ENCODE measurements at regions of chr4 and their contacts with region 1.

Region 1: GRCh38 chr4:15001869-15002658 is at the start of gene CPEB2:
- DNase-seq: peak; percentile 95 to 96
- ATAC-seq: peak; percentile 87 to 94 (median 89)
- H3K4me3 ChIP-seq: peak within 1 kb of the TSS; percentile 75 to 99 (median 96)
- H3K27ac ChIP-seq: peak within 1 kb of the TSS; percentile 96 to 100 (median 100)
- H3K4me1 ChIP-seq: peaks cover 0 to 29% (median 22%) of the 10 kb centered on the region in 9 donors
- H3K27me3 ChIP-seq: no peaks in the 10 kb centered on the region
- CTCF ChIP-seq: peak in 1 of 9 donors; percentile 8
- total RNA-seq, gene CPEB2: 11.6 to 31.8 (median 21.9) TPM

Region 2: DNA sequence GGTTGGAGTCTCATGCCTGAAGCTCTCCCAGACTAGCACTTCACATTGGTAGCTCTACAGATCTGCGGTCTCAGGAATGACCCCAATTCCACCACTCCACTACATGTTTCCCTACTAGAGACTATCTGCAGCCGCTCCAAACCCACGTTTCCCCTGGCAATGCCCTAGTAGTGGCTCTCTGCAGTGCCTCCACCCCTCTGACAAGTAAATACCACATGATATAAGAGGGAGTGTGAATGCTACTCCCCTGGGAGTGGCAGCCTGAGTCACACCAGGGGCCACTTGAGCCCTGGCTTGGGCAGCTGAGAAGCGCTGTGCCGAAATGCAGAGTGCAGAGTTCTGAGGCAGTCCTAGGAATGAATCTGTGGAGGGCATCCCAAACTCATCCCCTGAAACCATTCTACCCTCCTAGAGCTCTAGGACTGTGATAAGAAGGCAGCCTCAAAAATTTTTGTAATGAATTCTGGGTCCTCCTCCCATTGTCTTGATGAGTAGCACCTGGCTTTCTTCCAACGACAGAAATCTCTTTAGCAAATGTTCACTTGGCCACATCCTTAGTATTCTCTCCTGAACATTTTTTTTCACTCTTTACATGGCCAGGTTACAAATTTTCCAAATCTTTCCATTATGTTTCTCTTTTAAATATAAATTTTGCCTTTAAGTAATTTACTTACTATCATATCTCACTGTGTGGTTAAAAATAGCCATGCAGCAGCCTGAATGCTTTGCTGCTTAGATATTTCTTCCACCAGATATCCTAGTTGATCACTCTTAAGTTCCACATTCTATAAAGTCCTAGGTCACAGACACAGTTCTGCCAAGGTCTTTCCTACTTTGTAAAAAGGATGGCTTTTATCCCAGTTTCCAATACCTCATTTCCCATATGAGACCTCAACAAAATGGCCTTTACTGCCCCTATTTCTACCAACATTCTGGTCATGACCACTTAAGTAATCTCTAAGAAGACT is 160.0 kb before region 1 on chr4:
- intact Hi-C with region 1: loop called in 4 of 10 experiments (anchors 5 to 10 kb)
- DNase-seq: peak; percentile 28 to 54
- ATAC-seq: peak; percentile 78 to 99 (median 93)
- H3K4me3 ChIP-seq: peak overlapping the region in 1 of 10 donors; percentile 7
- H3K27ac ChIP-seq: peak overlapping the region in 9 of 10 donors; percentile 29 to 81 (median 74)
- H3K4me1 ChIP-seq: peaks cover 0 to 24% (median 19%) of the 10 kb centered on the region in 9 donors
- H3K27me3 ChIP-seq: no peaks in the 10 kb centered on the region
- CTCF ChIP-seq: no peak

Region 3: DNA sequence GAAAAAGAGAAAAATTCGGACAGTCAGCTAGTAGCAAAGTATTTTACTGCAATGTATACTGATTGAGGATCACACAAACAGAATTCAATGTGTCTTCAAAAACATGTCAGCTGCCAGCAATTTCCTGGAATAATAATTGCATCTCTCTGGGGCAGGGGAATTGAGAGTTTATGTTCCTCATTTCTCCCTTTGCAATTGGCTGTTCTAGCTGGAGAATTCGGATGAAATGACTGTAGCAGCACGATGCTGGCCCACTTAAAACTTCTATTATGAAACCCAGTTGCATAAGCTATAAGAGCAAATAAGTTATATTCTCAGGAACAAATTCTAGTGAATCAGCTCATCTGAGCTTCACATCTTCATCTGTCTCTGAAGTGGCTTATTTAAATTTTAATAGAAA is 99.7 kb before region 1 on chr4:
- intact Hi-C with region 1: no loop called
- DNase-seq: no peak
- ATAC-seq: no peak
- H3K4me3 ChIP-seq: no peak overlapping the region
- H3K27ac ChIP-seq: no peak overlapping the region
- H3K4me1 ChIP-seq: no peaks in the 10 kb centered on the region
- H3K27me3 ChIP-seq: no peaks in the 10 kb centered on the region
- CTCF ChIP-seq: no peak

Region 4: DNA sequence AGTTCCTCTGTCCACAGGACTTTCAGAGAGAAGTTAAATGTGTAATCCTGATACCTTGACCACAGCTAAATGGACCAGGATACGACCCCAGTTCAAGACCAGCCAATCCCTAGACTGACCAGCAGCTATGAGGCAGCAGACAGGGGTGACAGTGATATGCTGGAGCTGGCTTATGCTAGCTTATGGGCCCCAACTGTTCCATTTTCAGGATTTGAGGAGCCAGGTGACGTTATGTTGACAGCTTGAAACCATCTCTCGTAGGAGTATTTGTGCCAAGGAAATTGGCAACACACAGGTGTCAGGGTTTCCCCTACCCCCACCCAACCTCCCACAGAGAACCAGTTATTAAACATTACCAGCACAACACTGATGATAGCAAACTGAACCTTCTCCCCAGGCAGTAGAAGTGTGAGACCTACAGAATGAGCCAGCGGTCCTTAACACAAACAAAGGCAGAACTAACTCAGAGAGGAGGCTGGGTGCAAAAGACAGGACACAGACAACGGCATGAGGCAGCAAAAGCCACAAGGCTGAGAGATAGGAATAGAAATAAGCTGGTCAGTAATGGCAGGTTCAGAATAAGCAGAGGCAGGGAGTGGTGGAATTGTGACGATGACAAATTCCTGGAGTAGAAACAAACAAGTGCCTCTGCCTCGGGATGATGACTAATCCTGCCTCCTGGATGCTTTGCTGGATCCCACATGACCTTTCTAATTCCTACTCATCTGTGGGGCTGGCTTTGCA is 85.3 kb before region 1 on chr4:
- intact Hi-C with region 1: loop called in 4 of 10 experiments (anchors 2 to 10 kb)
- DNase-seq: peak in 1 of 2 donors; percentile 49
- ATAC-seq: peak; percentile 81 to 96 (median 91)
- H3K4me3 ChIP-seq: peak overlapping the region in 1 of 10 donors; percentile 10
- H3K27ac ChIP-seq: peak overlapping the region; percentile 1 to 85 (median 66)
- H3K4me1 ChIP-seq: peaks cover 0 to 22% (median 8%) of the 10 kb centered on the region in 9 donors
- H3K27me3 ChIP-seq: no peaks in the 10 kb centered on the region
- CTCF ChIP-seq: no peak

Region 5: GRCh38 chr4:15457406-15458201 is 455.5 kb after region 1 on chr4:
- intact Hi-C with region 1: loop called in 2 of 10 experiments (anchors 10 kb)
- DNase-seq: no peak
- ATAC-seq: peak in 7 of 8 donors; percentile 46 to 87 (median 76)
- H3K4me3 ChIP-seq: no peak overlapping the region
- H3K27ac ChIP-seq: peak overlapping the region in 5 of 10 donors; percentile 13 to 43 (median 19)
- H3K4me1 ChIP-seq: peaks cover 0 to 24% (median 11%) of the 10 kb centered on the region in 9 donors
- H3K27me3 ChIP-seq: no peaks in the 10 kb centered on the region
- CTCF ChIP-seq: peak; percentile 42 to 89 (median 75)

Region 6: DNA sequence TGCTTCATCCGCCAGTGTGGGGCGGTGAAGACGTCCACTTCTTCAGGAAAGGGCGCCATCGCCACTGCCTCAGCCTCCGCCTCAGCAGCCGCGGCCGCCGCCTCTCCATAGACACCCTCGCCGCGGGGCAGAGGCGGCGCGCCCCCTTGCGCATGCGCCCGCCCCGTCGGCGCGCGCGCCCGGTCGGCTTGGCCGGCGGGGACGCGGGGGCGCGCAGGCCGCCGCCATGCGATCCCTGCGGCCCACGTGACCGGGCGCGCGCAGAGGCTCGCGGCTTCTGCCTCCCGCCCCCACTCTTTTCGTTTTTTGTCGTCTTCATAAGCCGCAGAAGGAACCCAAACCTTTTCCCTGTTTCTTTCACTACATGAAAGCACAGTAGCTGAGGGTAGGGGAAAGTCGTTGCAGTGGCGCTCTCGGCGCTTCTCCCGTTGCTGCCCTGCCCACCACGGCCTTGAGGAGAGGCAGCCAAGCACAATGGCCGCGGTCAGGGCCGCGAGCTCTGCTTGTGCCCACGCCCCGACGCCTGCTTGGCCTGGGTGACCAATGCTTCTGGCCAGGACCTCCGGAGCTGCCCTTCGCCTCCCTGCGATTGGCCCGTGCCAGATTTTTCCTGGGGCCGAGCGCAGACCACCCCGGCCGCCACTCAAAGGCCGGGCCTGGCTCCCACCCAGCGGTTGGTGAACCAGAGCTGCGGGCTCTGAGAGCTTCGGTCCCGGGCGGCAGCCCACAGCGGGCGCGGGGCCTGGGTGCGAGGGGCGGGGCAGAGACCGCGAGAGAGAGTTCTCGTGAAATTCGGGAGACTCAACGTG is 653.4 kb after region 1 on chr4 and contains the start of gene FBXL5:
- intact Hi-C with region 1: loop called in 2 of 10 experiments (anchors 5 to 10 kb)
- DNase-seq: peak; percentile 77 to 85
- ATAC-seq: peak; percentile 86 to 93 (median 90)
- H3K4me3 ChIP-seq: peak within 1 kb of the TSS; percentile 48 to 85 (median 72)
- H3K27ac ChIP-seq: peak within 1 kb of the TSS; percentile 91 to 100 (median 99)
- H3K4me1 ChIP-seq: peaks cover 0 to 81% (median 42%) of the 10 kb centered on the region in 9 donors
- H3K27me3 ChIP-seq: no peaks in the 10 kb centered on the region
- CTCF ChIP-seq: no peak
- total RNA-seq, gene FBXL5: 63.2 to 102 (median 77.3) TPM